Psoas muscle (tissue), 8 donors: ENCODE measurements at regions of chr7 and their contacts with region 1.

Region 1: GRCh38 chr7:149090397-149091195 is at the start of gene ZNF786:
- DNase-seq: peak; percentile 91 to 93
- ATAC-seq: peak; percentile 98
- H3K4me3 ChIP-seq: peak within 1 kb of the TSS; percentile 100
- H3K27ac ChIP-seq: peak within 1 kb of the TSS; percentile 98
- H3K4me1 ChIP-seq: peaks cover 6% of the 10 kb centered on the region
- H3K27me3 ChIP-seq: no peaks in the 10 kb centered on the region
- CTCF ChIP-seq: peak; percentile 94
- total RNA-seq, gene ZNF786: 2.1 to 3.6 (median 3.3) TPM

Region 2: GRCh38 chr7:148729984-148730733 is 360.4 kb before region 1 on chr7:
- intact Hi-C with region 1: no loop called
- DNase-seq: no peak
- ATAC-seq: peak; percentile 31 to 46 (median 39)
- H3K4me3 ChIP-seq: no peak overlapping the region
- H3K27ac ChIP-seq: peak overlapping the region; percentile 1
- H3K4me1 ChIP-seq: peaks cover 72% of the 10 kb centered on the region
- H3K27me3 ChIP-seq: no peaks in the 10 kb centered on the region
- CTCF ChIP-seq: no peak

Region 3: DNA sequence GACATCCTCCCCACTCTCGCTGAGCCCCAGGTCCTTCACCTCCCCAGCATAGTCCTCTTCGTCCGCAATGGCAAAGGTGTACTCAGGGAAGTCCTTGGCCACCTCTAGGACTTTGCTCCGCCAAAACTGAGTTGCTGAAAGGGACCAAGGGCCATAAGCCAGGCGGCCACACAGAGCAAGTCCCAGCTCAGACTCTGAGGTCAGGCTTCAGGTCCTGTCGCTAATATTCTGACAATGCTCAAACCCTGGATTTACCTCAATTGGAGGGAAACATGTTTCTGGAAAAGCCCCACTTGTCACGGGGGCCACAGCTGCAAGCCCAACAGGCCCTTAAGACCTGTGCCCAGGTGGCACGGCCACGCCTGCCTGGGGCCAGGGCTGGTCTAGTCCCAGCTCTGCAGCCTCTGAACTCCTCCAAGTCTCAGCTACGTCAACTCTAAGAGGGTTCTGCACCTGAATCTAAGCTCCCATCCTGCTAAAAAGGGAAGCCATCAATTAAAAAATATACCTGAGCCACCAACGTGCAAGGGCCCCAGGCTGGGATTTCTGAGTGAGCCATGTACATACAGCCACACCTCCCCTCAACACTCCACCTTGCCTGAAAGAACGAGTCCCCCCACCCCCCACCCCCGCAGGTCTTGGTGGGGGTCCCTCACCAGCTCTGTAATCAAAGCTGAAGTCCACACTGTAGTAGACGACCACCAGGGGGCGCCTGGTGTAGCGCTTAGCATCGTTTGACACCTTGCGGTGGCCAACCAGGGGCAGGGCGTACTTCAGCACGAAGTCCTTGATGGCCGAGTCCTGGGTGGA is 85.2 kb before region 1 on chr7:
- intact Hi-C with region 1: loop called (anchors 1 to 2 kb)
- DNase-seq: peak; percentile 87 to 93
- ATAC-seq: peak; percentile 85 to 98 (median 94)
- H3K4me3 ChIP-seq: no peak overlapping the region
- H3K27ac ChIP-seq: no peak overlapping the region
- H3K4me1 ChIP-seq: no peaks in the 10 kb centered on the region
- H3K27me3 ChIP-seq: no peaks in the 10 kb centered on the region
- CTCF ChIP-seq: peak; percentile 90

Region 4: GRCh38 chr7:149067876-149068275 is 22.7 kb before region 1 on chr7:
- intact Hi-C with region 1: loop called in 1 of 2 experiments (anchors 1 kb)
- DNase-seq: no peak
- ATAC-seq: no peak
- H3K4me3 ChIP-seq: no peak overlapping the region
- H3K27ac ChIP-seq: no peak overlapping the region
- H3K4me1 ChIP-seq: no peaks in the 10 kb centered on the region
- H3K27me3 ChIP-seq: no peaks in the 10 kb centered on the region
- CTCF ChIP-seq: no peak

Region 5: GRCh38 chr7:149125863-149126661 is 35.5 kb after region 1 on chr7 and contains the start of gene ZNF425:
- intact Hi-C with region 1: loop called (anchors 2 kb)
- DNase-seq: peak; percentile 93 to 97
- ATAC-seq: peak; percentile 95 to 99 (median 98)
- H3K4me3 ChIP-seq: peak within 1 kb of the TSS; percentile 91
- H3K27ac ChIP-seq: peak within 1 kb of the TSS; percentile 92
- H3K4me1 ChIP-seq: peaks cover 11% of the 10 kb centered on the region
- H3K27me3 ChIP-seq: no peaks in the 10 kb centered on the region
- CTCF ChIP-seq: peak; percentile 93
- total RNA-seq, gene ZNF425: 0.76 to 1.9 (median 1.7) TPM

Region 6: DNA sequence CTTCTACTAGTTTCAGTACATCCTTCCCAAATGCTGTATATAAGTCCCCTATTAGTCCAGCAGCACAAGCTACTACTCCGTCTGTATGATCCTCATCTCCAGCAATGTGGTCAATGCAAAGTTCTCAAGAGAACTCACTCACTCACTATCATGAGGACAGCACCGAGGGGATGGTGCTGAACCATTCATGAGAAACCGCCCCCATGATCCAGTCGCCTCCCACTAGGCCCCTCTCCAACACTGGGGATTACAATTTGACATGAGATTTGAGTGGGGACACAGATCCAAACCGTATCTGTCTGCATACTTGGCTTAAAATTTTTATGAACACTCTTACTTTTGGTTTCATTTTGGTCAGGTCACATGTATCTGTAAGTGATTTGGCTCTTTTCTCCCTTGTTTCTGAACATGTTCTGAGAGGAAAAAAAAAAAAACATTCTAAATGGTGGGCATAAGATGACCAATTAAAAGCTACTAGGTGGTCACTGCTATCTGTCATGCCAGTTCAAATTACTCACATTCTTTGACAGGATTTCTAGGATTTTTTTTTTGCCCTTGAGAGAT is 231.5 kb after region 1 on chr7:
- intact Hi-C with region 1: no loop called
- DNase-seq: no peak
- ATAC-seq: no peak
- H3K4me3 ChIP-seq: peak overlapping the region; percentile 19
- H3K27ac ChIP-seq: no peak overlapping the region
- H3K4me1 ChIP-seq: no peaks in the 10 kb centered on the region
- H3K27me3 ChIP-seq: peaks cover 0 to 23% (median 0%) of the 10 kb centered on the region in 3 donors
- CTCF ChIP-seq: no peak

Region 7: DNA sequence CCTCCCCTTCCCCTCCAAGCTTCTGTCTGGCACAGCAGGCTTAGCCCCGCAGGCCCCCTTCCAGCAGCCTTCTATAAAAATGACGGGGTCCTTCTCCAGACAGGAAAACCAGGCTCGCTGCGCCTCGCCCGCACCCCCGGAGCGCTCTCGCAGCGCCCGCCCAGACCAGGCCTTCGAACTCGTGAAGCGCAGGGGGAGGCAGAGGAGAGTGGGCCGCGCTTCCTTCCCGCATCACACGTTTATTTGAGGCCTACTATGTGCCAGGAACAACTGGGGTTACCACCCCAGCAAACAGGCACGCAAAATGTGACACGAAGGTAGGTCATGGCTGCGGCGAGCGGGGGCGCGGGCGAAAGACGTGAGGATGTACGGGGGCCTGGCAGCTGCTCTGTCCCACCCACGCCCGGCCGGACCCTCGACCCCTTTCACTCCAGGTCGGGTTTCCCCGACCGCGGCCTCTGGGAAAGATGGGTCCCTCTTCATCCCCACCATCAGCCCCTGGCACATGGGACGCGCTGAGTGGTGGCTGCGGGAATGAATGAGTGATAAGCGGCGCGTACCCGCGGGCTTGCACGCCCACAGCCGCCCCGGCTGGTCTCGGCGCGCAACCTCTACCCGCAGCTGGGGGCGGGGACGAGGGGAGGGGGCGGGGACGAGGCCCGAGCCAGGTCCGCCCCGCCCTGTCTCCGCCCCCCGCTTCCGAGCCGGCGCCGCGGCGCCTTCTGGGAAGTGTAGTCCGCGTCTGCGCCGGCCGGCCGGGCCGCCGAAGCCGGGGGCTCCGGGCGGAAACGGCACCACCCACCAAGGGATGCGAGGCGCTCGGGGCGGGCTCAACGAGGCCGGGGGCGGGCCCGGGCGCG is 623.7 kb after region 1 on chr7:
- intact Hi-C with region 1: no loop called
- DNase-seq: peak; percentile 91 to 94
- ATAC-seq: peak; percentile 91 to 97 (median 93)
- H3K4me3 ChIP-seq: peak overlapping the region; percentile 86
- H3K27ac ChIP-seq: peak overlapping the region; percentile 74
- H3K4me1 ChIP-seq: peaks cover 29% of the 10 kb centered on the region
- H3K27me3 ChIP-seq: no peaks in the 10 kb centered on the region
- CTCF ChIP-seq: no peak